Sigmoid colon (tissue), 7 donors: ENCODE measurements at regions of chr3 and their contacts with region 1.

Region 1: GRCh38 chr3:129934234-129935123 is 40.0 kb upstream of the TRH start:
- DNase-seq: peak; percentile 57
- H3K4me3 ChIP-seq: peak overlapping the region in 2 of 4 donors; percentile 2 to 8
- H3K27ac ChIP-seq: no peak overlapping the region
- H3K4me1 ChIP-seq: no peaks in the 10 kb centered on the region
- H3K27me3 ChIP-seq: no peaks in the 10 kb centered on the region
- CTCF ChIP-seq: peak; percentile 60 to 96 (median 86)
- EP300 ChIP-seq: no peak
- POLR2A ChIP-seq: no peak

Region 2: DNA sequence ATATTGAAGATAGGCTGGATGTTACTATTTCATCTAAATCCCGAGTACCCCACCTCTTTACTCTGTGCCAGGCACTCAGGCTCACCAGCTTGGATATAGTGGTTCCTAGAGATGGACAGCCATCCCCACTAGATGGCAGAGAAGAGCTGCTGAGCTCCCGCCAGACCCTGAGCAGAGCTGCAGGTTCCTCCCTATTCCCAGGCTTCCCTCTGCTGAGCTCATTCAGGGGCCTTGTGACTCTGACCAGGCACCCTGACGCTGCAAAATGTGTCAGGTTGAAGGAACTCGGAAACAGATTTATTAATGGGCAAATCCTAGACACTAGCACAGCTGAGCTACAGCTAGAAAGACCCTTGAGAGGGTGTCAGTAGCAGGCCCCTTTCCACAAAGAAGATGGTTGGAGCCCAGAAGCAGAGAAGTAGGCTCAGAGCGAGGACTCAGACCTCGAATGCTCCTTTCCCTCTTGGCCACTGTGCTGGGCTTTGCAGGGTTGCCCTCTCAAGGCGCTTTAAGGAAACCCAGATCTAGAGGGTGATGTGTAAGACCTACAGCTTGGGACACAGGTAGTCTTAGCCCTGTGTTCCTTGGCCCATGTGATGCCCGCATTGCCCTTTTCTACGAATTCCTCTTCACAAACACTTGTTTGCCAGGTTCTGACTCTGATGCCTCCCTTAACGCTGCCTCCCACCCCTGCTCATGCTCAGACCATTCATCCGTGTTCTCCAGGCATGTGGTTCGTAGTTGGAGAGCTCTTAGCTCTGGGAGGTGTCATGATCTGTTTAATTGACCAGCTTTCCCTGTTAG is 444.0 kb before region 1 on chr3:
- intact Hi-C with region 1: loop called (anchors 2 kb)
- DNase-seq: peak; percentile 94
- H3K4me3 ChIP-seq: no peak overlapping the region
- H3K27ac ChIP-seq: peak overlapping the region; percentile 69 to 89 (median 74)
- H3K4me1 ChIP-seq: peaks cover 0 to 23% (median 9%) of the 10 kb centered on the region in 4 donors
- H3K27me3 ChIP-seq: no peaks in the 10 kb centered on the region
- CTCF ChIP-seq: peak; percentile 31 to 80 (median 75)
- EP300 ChIP-seq: peak in 1 of 4 donors; percentile 73
- POLR2A ChIP-seq: no peak

Region 3: DNA sequence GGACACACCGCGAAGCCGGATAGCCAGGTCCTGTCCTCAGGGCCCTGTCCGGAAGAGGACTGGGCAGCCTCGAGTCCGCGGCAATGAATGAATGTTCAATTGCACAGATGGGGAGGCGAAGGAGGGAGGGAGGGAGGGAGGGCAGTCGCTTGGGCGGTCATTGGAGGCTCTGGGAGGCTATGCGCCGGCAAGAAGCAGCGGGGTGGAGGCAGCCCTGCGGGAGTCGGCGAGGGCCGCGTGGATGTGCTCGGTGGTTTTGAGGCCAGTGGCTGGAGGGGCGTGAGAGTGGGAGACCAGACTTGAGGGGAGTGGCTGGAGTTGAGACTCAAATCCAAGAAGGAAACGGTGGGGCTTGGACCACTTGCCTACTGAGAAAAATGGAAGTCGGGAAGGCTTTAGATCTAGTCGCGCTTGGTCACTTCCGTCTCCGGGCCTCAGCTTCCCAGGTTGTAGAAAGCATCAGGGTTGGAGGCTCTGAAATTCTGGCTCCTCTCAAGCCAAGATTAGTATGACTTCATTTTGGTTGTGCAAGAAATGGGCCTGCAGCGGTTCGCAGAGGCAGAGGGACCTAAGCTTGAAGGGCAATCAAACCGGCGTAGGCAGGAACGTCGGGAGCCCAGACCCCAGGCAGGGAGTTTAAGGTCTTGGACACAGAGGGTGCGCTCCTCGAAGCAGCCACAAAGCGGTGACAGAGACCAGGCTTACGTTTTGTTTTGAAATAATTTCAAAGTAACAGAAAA is 306.9 kb before region 1 on chr3:
- intact Hi-C with region 1: loop called (anchors 1 kb)
- DNase-seq: peak; percentile 87
- H3K4me3 ChIP-seq: peak overlapping the region; percentile 58 to 75 (median 62)
- H3K27ac ChIP-seq: peak overlapping the region; percentile 95 to 99 (median 96)
- H3K4me1 ChIP-seq: peaks cover 0 to 46% (median 43%) of the 10 kb centered on the region in 4 donors
- H3K27me3 ChIP-seq: no peaks in the 10 kb centered on the region
- CTCF ChIP-seq: peak; percentile 54 to 86 (median 72)
- EP300 ChIP-seq: no peak
- POLR2A ChIP-seq: no peak

Region 4: GRCh38 chr3:129650256-129650872 is 284.1 kb before region 1 on chr3:
- intact Hi-C with region 1: loop called (anchors 5 kb)
- DNase-seq: peak; percentile 86
- H3K4me3 ChIP-seq: no peak overlapping the region
- H3K27ac ChIP-seq: no peak overlapping the region
- H3K4me1 ChIP-seq: peaks cover 0 to 33% (median 11%) of the 10 kb centered on the region in 4 donors
- H3K27me3 ChIP-seq: no peaks in the 10 kb centered on the region
- CTCF ChIP-seq: peak; percentile 47 to 75 (median 68)
- EP300 ChIP-seq: no peak
- POLR2A ChIP-seq: no peak

Region 5: DNA sequence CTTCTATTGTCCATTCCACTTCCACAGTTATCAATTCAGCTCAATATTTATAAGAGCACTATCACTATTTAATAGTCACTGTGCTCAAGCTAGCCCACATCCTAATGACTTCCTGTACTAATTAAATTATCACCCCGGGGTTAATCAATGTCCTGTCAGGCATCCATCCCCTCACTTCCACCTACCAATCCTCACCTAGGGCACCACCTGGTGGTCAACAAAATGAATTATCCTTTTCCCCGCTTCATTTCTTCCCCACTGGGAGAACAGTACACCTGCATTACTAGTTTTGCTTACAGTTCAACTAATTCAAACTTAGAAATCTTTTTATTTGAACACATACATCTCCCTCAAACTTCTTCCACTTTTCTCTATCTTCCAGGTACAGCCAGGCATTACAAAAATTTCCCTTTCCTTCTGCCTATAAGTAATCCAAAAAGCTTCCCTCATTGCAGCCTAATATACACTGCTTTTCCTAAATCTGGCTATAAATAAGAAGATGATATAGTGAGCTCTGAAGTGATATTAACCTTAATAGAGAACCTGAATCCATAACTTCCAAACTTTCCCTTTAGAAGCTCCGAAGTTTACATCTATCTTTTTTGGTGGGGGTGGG is 109.4 kb before region 1 on chr3:
- intact Hi-C with region 1: loop called (anchors 5 kb)
- DNase-seq: no peak
- H3K4me3 ChIP-seq: no peak overlapping the region
- H3K27ac ChIP-seq: no peak overlapping the region
- H3K4me1 ChIP-seq: peaks cover 0 to 11% (median 4%) of the 10 kb centered on the region in 4 donors
- H3K27me3 ChIP-seq: no peaks in the 10 kb centered on the region
- CTCF ChIP-seq: peak in 3 of 4 experiments; percentile 62 to 69 (median 63)
- EP300 ChIP-seq: no peak
- POLR2A ChIP-seq: no peak